GM12878 (cell line): ENCODE measurements at regions of chr19 and their contacts with region 1.

Region 1: DNA sequence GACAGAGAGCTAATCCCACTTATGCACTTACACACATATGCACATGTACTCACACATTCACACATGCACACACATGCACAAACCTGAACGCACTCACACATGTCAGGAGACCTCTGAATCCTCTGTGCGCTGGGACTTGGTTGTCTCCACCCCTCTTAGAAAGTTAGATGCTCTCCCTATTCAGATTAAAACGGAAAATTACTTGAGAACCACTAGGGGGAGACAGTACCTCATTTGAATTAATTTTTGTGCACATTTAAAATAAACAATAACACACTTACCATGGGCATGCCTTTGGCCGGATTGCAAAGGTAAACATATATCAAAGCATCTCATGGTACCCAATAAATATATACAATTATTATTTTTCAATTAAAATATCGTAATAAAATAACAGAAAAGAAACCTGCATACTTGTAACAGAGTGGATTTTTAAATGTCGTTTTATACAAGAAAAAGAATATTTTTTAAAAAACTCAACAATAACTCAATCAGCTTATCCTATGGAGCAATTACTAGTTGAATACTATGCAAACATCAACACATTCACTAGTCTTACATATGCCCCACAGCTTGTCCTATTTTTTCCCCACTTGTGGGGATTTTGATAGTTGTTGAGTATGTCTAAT is 9.5 kb upstream of the LILRB4 start:
- DNase-seq: no peak
- ATAC-seq: peak; percentile 76
- H3K4me3 ChIP-seq: no peak overlapping the region
- H3K27ac ChIP-seq: no peak overlapping the region
- H3K4me1 ChIP-seq: peaks cover 5% of the 10 kb centered on the region
- H3K27me3 ChIP-seq: no peaks in the 10 kb centered on the region
- CTCF ChIP-seq: peak; percentile 51 to 67 (median 63)
- EP300 ChIP-seq: no peak
- POLR2A ChIP-seq: no peak
- RAD21 ChIP-seq: peak; percentile 75

Region 2: DNA sequence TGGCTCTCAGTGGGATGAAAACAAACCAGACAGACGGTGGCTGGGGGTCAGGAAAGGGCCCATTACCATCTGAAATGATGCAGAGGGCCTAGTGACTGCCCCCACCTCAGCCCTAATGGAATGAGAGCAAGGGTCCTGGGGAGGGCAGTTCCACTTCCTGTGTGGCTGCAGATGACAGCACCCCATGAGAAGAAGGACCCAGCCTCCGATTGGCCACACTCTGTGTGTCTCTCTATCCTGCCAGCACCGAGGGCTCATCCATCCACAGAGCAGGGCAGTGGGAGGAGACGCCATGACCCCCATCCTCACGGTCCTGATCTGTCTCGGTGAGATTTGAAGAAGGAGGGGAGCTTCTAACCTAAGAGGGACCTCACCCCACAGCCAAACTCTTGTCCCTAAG is 22.5 kb before region 1 on chr19:
- CTCF ChIA-PET with region 1: interaction called, 3 read pairs
- POLR2A ChIA-PET with region 1: no interaction called
- RAD21 ChIA-PET with region 1: interaction called, 3 read pairs
- SMC1A ChIA-PET with region 1: interaction called, 10 read pairs
- in situ Hi-C with region 1: no loop called
- intact Hi-C with region 1: no loop called
- DNase-seq: no peak
- ATAC-seq: no peak; the same call in 2 of the 3 replicates
- H3K4me3 ChIP-seq: no peak overlapping the region
- H3K27ac ChIP-seq: peak overlapping the region; percentile 15; the same call in 1 of the 2 replicates
- H3K4me1 ChIP-seq: peaks cover 27% of the 10 kb centered on the region
- H3K27me3 ChIP-seq: no peaks in the 10 kb centered on the region
- CTCF ChIP-seq: no peak
- EP300 ChIP-seq: no peak
- POLR2A ChIP-seq: no peak; the same call in 1 of the 2 replicates
- RAD21 ChIP-seq: no peak

Region 3: DNA sequence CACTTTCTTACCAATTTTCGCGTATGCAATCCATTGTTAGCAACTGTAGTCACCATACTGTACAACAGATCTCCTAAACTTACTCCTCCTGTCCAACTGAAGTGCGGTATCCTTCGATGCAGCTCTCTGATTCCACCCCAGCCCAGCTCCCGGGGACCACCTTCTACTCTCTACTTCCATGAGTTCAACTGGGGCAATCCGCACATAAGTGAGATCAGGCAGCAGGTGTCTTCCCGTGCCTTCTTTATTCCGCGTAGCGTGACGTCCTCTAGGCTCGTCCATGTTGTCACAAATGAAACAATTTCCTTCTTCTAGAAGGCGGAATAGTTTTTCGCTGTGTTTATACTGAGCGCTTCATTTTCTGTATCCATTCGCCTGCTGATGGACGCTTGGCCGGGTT is 14.6 kb before region 1 on chr19:
- CTCF ChIA-PET with region 1: interaction called, 17 read pairs
- POLR2A ChIA-PET with region 1: interaction called, 5 read pairs
- RAD21 ChIA-PET with region 1: no interaction called
- SMC1A ChIA-PET with region 1: interaction called, 5 read pairs
- in situ Hi-C with region 1: no loop called
- intact Hi-C with region 1: no loop called
- DNase-seq: no peak
- ATAC-seq: no peak
- H3K4me3 ChIP-seq: no peak overlapping the region
- H3K27ac ChIP-seq: no peak overlapping the region
- H3K4me1 ChIP-seq: peaks cover 4% of the 10 kb centered on the region
- H3K27me3 ChIP-seq: no peaks in the 10 kb centered on the region
- CTCF ChIP-seq: no peak
- EP300 ChIP-seq: no peak
- POLR2A ChIP-seq: no peak
- RAD21 ChIP-seq: no peak

Region 4: DNA sequence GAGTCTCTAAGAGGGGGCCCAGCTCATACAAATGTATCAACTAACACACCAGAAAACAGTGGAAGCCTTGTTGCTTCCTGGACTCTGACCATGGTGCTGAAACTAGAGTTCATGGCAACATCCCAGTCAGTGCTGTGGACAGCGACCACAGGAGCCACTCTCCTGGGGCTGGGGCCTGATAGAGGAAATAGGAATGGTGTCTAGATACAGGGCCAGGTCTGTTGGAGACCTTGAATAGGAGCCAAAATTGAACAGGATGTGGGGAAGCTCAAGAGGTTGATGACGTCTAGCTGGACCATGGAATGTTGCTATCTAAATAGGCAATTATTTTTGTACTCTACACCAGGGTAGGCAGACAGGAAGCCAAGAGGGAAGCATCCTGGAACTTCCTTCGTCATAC is 31.2 kb after region 1 on chr19:
- CTCF ChIA-PET with region 1: interaction called, 842 read pairs
- POLR2A ChIA-PET with region 1: interaction called, 3 read pairs
- RAD21 ChIA-PET with region 1: interaction called, 7 read pairs
- SMC1A ChIA-PET with region 1: interaction called, 64 read pairs
- in situ Hi-C with region 1: no loop called
- intact Hi-C with region 1: no loop called
- DNase-seq: no peak
- ATAC-seq: peak; percentile 52; the same call in 2 of the 3 replicates
- H3K4me3 ChIP-seq: no peak overlapping the region
- H3K27ac ChIP-seq: no peak overlapping the region
- H3K4me1 ChIP-seq: no peaks in the 10 kb centered on the region
- H3K27me3 ChIP-seq: no peaks in the 10 kb centered on the region; a peak in 1 of 4 replicates
- CTCF ChIP-seq: no peak
- EP300 ChIP-seq: no peak
- POLR2A ChIP-seq: no peak
- RAD21 ChIP-seq: no peak

Region 5: GRCh38 chr19:55062734-55063492 is 409.6 kb after region 1 on chr19 and contains the start of gene RDH13:
- CTCF ChIA-PET with region 1: no interaction called
- POLR2A ChIA-PET with region 1: no interaction called
- RAD21 ChIA-PET with region 1: no interaction called
- SMC1A ChIA-PET with region 1: no interaction called
- in situ Hi-C with region 1: no loop called
- intact Hi-C with region 1: no loop called
- DNase-seq: peak; percentile 75
- ATAC-seq: peak; percentile 100
- H3K4me3 ChIP-seq: peak within 1 kb of the TSS; percentile 90
- H3K27ac ChIP-seq: peak within 1 kb of the TSS; percentile 37; the same call in 1 of the 2 replicates
- H3K4me1 ChIP-seq: no peaks in the 10 kb centered on the region
- H3K27me3 ChIP-seq: no peaks in the 10 kb centered on the region
- CTCF ChIP-seq: no peak
- EP300 ChIP-seq: no peak
- POLR2A ChIP-seq: peak; percentile 72
- RAD21 ChIP-seq: no peak
- polyA plus RNA-seq, gene RDH13: 1.3 to 1.7 TPM